ENCODE measurements at regions of chr3 and their contacts with region 1.

Region 1: GRCh38 chr3:196317687-196318467 is at the start of gene DYNLT2B:
- DNase-seq: peak; percentile 88
- H3K4me3 Mint-ChIP-seq: peak within 1 kb of the TSS; percentile 94
- H3K27ac Mint-ChIP-seq: peak within 1 kb of the TSS; percentile 93
- H3K4me1 Mint-ChIP-seq: peaks cover 20% of the 10 kb centered on the region
- H3K27me3 Mint-ChIP-seq: no peaks in the 10 kb centered on the region
- total RNA-seq, gene DYNLT2B: 13.3 TPM

Region 2: DNA sequence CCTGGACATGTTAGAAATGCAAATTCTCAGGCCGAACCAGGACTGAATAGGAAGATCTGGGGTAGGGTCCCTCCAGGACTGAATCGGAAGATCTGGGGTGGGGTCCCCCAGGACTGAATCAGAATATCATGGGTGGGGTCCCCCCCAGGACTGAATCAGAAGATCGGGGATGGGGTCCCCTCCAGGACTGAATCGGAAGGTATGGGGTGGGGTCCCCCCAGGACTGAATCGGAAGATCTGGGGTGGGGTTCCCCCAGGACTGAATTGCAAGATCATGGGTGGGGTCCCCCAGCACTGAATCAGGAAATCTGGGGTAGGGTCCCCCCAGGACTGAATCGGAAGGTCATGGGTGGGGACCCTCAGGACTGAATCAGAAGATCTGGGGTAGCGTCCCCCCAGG is 361.3 kb before region 1 on chr3:
- CTCF ChIA-PET with region 1: no interaction called
- intact Hi-C with region 1: no loop called
- DNase-seq: no peak
- H3K4me3 Mint-ChIP-seq: no peak overlapping the region
- H3K27ac Mint-ChIP-seq: no peak overlapping the region
- H3K4me1 Mint-ChIP-seq: peaks cover 25% of the 10 kb centered on the region
- H3K27me3 Mint-ChIP-seq: no peaks in the 10 kb centered on the region

Region 3: GRCh38 chr3:196219194-196219978 is 98.5 kb before region 1 on chr3:
- CTCF ChIA-PET with region 1: no interaction called
- intact Hi-C with region 1: loop called (anchors 1 kb)
- DNase-seq: peak; percentile 89
- H3K4me3 Mint-ChIP-seq: peak overlapping the region; percentile 66
- H3K27ac Mint-ChIP-seq: peak overlapping the region; percentile 84
- H3K4me1 Mint-ChIP-seq: peaks cover 26% of the 10 kb centered on the region
- H3K27me3 Mint-ChIP-seq: no peaks in the 10 kb centered on the region

Region 4: GRCh38 chr3:196251918-196252317 is 66.0 kb before region 1 on chr3:
- CTCF ChIA-PET with region 1: interaction called, 3 read pairs
- intact Hi-C with region 1: loop called (anchors 1 kb)
- DNase-seq: no peak
- H3K4me3 Mint-ChIP-seq: no peak overlapping the region
- H3K27ac Mint-ChIP-seq: no peak overlapping the region
- H3K4me1 Mint-ChIP-seq: peaks cover 1% of the 10 kb centered on the region
- H3K27me3 Mint-ChIP-seq: no peaks in the 10 kb centered on the region

Region 5: GRCh38 chr3:196274585-196274984 is 43.3 kb before region 1 on chr3:
- CTCF ChIA-PET with region 1: interaction called, 4 read pairs
- intact Hi-C with region 1: loop called (anchors 1 kb)
- DNase-seq: peak; percentile 86
- H3K4me3 Mint-ChIP-seq: peak overlapping the region; percentile 52
- H3K27ac Mint-ChIP-seq: peak overlapping the region; percentile 94
- H3K4me1 Mint-ChIP-seq: peaks cover 73% of the 10 kb centered on the region
- H3K27me3 Mint-ChIP-seq: no peaks in the 10 kb centered on the region

Region 6: GRCh38 chr3:196432137-196432879 is 114.4 kb after region 1 on chr3 and contains the start of gene UBXN7:
- CTCF ChIA-PET with region 1: interaction called, 7 read pairs
- intact Hi-C with region 1: loop called (anchors 1 kb)
- DNase-seq: peak; percentile 97
- H3K4me3 Mint-ChIP-seq: peak within 1 kb of the TSS; percentile 69
- H3K27ac Mint-ChIP-seq: peak within 1 kb of the TSS; percentile 93
- H3K4me1 Mint-ChIP-seq: peaks cover 15% of the 10 kb centered on the region
- H3K27me3 Mint-ChIP-seq: no peaks in the 10 kb centered on the region
- total RNA-seq, gene UBXN7: 54.2 to 62.5 TPM

Region 7: DNA sequence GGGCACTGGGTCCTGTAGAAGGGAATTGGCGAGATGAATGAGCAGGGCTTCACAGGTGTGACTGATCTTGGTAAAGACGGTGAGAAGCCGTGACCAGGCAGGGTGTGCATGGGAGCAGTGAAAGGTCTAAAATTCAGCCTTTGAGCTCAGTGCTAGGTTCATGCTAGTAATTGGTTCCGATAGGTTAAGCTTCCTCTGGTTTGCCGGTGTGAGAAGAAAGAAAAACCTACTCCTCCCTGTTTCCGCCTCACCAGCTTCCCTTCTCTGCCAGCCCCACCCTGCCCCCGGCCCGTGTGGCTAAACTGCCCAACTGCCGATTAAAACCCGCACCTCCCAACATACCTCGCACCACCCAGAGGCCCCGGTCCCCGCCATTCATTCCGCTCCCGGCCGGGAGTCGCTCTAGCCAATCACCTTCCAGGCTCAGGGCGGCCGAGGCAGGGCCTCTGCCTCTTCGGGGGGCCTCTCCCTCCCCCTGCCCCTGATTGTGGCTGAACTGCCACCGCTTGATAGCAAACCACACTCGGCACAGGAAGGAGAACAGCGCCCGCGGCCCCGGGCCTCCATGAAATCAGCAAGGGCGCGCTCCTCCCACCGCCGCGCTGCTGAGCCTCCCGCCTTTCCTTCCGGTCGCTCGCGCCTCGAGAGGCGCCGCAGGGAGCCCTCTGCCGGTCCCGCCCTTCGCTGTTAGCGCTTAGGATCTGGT is 314.3 kb after region 1 on chr3:
- CTCF ChIA-PET with region 1: no interaction called
- intact Hi-C with region 1: loop called (anchors 5 kb)
- DNase-seq: peak; percentile 90
- H3K4me3 Mint-ChIP-seq: peak overlapping the region; percentile 88
- H3K27ac Mint-ChIP-seq: peak overlapping the region; percentile 97
- H3K4me1 Mint-ChIP-seq: peaks cover 48% of the 10 kb centered on the region
- H3K27me3 Mint-ChIP-seq: no peaks in the 10 kb centered on the region

Region 8: DNA sequence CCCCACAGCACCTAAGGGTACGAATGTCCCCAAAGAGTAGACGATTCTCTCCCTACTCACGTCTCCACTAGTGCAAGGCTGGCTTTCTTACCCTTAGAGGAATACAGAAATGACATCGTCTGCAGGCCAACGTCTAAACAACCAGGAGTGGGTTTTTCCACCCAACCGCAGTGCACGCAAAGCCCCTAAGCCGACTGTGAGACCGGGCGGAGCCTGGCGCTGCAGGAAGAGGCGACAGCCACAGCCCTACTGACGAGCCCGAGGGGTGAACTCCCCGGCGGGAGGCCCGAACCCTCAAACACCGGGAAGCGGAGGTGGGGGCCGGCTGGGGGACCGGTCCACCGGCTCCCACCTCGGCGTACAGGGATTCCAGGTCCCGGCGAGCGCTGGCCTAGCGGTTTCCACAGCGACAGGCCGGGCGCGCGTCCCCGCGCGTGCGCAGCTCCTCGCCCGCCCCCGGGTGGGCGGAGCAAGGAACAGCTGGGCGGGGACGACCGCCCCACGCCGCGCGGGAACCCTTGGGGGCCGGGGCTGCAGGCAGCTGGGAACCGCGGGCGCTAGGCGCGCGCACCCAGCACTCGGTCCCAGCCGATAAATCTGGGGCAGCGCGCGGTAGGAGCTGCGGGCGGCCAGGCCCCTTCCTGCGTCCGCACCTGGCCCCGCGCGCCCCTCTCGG is 394.1 kb after region 1 on chr3 and contains the starts of genes CEP19 and PIGX:
- CTCF ChIA-PET with region 1: no interaction called
- intact Hi-C with region 1: loop called (anchors 1 kb)
- DNase-seq: peak; percentile 94
- H3K4me3 Mint-ChIP-seq: peak within 1 kb of the TSS; percentile 83
- H3K27ac Mint-ChIP-seq: peak within 1 kb of the TSS; percentile 92
- H3K4me1 Mint-ChIP-seq: peaks cover 34% of the 10 kb centered on the region
- H3K27me3 Mint-ChIP-seq: no peaks in the 10 kb centered on the region
- total RNA-seq, gene CEP19: 3.1 to 4.4 TPM
- total RNA-seq, gene PIGX: 30.7 to 32.8 TPM

Measured in activated naive CD4-positive, alpha-beta T cell treated with anti-CD3 and anti-CD28 coated beads for 36 hours (primary cell).